Caki2 (cell line): ENCODE measurements at regions of chr2 and their contacts with region 1.

Region 1: GRCh38 chr2:88554189-88554588 is 73.1 kb downstream of the EIF2AK3 start:
- DNase-seq: peak; percentile 14

Region 2: GRCh38 chr2:88258208-88258607 is 296.0 kb before region 1 on chr2:
- in situ Hi-C with region 1: no loop called
- DNase-seq: no peak

Region 3: DNA sequence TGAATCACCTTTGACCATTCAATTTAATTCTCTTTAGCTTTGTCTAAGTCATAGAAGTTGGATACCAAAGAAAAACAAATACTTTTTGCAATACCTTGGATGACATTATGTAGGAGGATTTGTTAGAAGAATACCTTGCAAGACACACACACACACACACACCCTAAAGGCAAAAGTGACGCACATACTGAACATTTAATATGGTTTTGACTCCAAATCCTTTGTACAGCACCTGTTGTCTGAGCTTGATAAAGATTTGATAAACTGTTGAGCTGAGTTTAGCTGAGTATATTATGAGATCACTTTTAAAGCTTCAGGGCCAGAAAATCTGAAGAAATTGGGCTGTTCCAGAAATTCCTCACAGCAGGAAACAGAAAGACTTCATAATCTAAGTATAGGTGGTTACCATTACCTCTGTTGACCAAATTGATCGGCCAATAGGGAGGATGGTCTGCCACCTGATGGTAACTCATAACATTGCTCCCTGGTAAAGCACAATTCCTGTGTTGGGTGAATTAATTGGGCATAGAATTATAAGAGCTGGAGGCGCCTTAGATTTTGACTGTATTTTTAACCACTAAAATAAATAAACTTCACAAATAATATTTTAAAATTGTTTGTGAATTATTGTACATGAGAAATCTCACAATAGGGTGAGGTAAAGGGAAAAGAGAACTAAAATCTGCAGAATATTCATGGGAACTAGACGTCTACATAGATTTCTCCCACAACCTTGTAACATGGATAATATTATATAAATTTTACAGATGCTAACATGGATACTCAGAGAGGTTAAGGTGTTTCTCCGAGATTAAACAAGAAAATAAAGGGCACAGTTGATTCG is 115.4 kb after region 1 on chr2:
- in situ Hi-C with region 1: loop called (anchors 25 kb)
- DNase-seq: peak; percentile 3